IMR-90 (cell line): ENCODE measurements at regions of chr2 and their contacts with region 1.

Region 1: GRCh38 chr2:110729106-110729505 is 3.3 kb upstream of the ACOXL start:
- DNase-seq: no peak
- ATAC-seq: no peak
- H3K4me3 ChIP-seq: no peak overlapping the region
- H3K27ac ChIP-seq: no peak overlapping the region
- H3K4me1 ChIP-seq: no peaks in the 10 kb centered on the region
- H3K27me3 ChIP-seq: peaks cover 65% of the 10 kb centered on the region
- CTCF ChIP-seq: no peak
- POLR2A ChIP-seq: no peak
- RAD21 ChIP-seq: no peak

Region 2: DNA sequence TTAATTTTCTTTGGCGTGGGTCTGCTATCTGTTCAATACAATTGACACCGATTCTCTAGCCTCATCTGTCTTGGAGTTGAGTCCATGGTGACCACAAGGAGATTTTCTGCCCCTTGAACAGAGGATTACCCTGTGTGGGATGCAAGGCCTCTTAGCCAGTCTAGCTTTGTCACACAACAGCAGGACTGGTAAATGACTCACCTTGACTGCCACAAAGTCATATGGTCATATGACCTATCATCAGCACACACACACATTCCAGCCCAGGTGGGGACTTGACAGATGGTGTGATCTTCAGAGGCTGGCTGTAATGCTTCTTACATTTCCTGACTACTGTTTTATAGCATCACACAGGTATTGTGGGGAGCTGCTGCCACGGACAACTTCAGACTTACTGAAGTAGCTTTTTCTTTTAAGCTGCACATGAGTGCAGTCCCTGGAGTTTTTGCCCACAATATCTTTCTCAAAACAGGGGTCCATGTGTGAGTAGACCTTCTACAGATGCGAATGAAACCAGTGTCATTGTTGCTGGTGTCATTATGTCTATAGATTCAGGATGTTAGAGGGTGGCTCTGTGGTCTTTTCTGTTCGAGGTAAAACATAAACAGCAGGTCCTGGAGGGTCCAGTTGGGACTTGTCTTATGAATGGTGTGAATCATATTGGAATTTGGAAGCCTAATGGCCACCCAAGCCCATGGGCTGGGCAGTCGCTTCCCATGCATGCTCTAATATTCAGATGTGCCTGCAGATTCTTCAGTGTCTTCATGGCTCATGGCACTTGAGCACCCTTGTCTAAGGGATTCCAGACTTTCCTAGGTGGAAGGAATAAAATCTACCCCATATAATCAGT is 15.4 kb before region 1 on chr2:
- CTCF ChIA-PET with region 1: no interaction called
- POLR2A ChIA-PET with region 1: no interaction called
- dilution Hi-C with region 1: no loop called
- in situ Hi-C with region 1: no loop called
- intact Hi-C with region 1: loop called (anchors 2 kb)
- DNase-seq: no peak
- ATAC-seq: no peak
- H3K4me3 ChIP-seq: no peak overlapping the region
- H3K27ac ChIP-seq: no peak overlapping the region
- H3K4me1 ChIP-seq: no peaks in the 10 kb centered on the region
- H3K27me3 ChIP-seq: peaks cover 30% of the 10 kb centered on the region
- CTCF ChIP-seq: no peak
- POLR2A ChIP-seq: no peak
- RAD21 ChIP-seq: no peak